ENCODE measurements at regions of chr17 and their contacts with region 1.

Region 1: GRCh38 chr17:35534576-35535093 is 2.8 kb downstream of the SLFN12L start:
- DNase-seq: no peak
- ATAC-seq: no peak
- H3K4me3 Mint-ChIP-seq: peak overlapping the region; percentile 83
- H3K27ac Mint-ChIP-seq: peak overlapping the region; percentile 74
- H3K4me1 Mint-ChIP-seq: peaks cover 60% of the 10 kb centered on the region
- H3K27me3 Mint-ChIP-seq: no peaks in the 10 kb centered on the region

Region 2: GRCh38 chr17:35605678-35606077 is 71.0 kb after region 1 on chr17:
- CTCF ChIA-PET with region 1: no interaction called
- POLR2A ChIA-PET with region 1: no interaction called
- intact Hi-C with region 1: no loop called
- DNase-seq: no peak
- ATAC-seq: no peak
- H3K4me3 Mint-ChIP-seq: no peak overlapping the region
- H3K27ac Mint-ChIP-seq: no peak overlapping the region
- H3K4me1 Mint-ChIP-seq: no peaks in the 10 kb centered on the region
- H3K27me3 Mint-ChIP-seq: no peaks in the 10 kb centered on the region

Region 3: DNA sequence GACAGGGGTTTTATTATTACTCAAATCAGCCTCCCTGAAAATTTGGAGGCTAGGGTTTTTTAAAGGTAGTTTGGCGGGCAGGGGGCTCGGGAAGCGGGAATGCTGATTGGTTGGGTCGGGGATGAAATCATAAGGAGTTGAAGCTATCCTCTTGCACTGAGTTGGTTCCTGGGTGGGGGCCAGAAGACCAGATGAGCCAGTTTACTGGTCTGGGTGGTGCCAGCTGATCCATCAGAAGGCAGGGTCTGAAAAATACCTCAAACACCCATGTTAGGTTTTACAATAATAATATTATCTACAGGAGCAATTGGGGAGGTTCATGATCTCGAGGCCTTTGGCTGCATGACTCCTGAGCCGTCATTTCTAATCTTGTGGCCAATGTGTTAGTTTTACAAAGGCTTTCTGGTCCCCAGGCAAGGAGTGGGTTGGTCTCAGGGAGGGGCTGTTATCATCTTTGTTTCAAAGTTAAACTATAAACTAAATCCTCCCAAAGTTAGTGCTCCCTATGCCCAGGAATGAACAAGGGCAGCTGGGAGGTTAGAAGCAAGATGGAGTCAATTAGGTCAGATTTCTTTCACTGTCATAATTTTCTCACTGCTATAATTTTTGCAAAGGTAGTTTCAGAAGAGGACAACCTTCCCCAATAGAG is 354.5 kb after region 1 on chr17:
- CTCF ChIA-PET with region 1: no interaction called
- POLR2A ChIA-PET with region 1: interaction called, 13 read pairs
- intact Hi-C with region 1: no loop called
- DNase-seq: peak; percentile 39
- ATAC-seq: peak; percentile 66
- H3K4me3 Mint-ChIP-seq: no peak overlapping the region
- H3K27ac Mint-ChIP-seq: peak overlapping the region; percentile 6
- H3K4me1 Mint-ChIP-seq: peaks cover 33% of the 10 kb centered on the region
- H3K27me3 Mint-ChIP-seq: no peaks in the 10 kb centered on the region

Measured in activated CD4-positive, alpha-beta T cell treated with anti-CD3 and anti-CD28 coated beads for 36 hours (primary cell).